Mammary epithelial cell (primary cell): ENCODE measurements at regions of chr7 and their contacts with region 1.

Region 1: GRCh38 chr7:28626624-28627262 is 214.4 kb downstream of the CREB5 start:
- DNase-seq: peak; percentile 39
- H3K4me3 ChIP-seq: no peak overlapping the region
- H3K27ac ChIP-seq: no peak overlapping the region
- H3K4me1 ChIP-seq: peaks cover 5% of the 10 kb centered on the region
- H3K27me3 ChIP-seq: no peaks in the 10 kb centered on the region
- CTCF ChIP-seq: peak; percentile 69 to 75

Region 2: GRCh38 chr7:28389504-28390395 is 237.0 kb before region 1 on chr7:
- CTCF ChIA-PET with region 1: no interaction called
- dilution Hi-C with region 1: no loop called
- in situ Hi-C with region 1: loop called in 1 of 2 experiments (anchors 5 kb)
- intact Hi-C with region 1: loop called (anchors 1 kb)
- DNase-seq: peak; percentile 58
- H3K4me3 ChIP-seq: peak overlapping the region; percentile 26 to 58 (median 30)
- H3K27ac ChIP-seq: no peak overlapping the region
- H3K4me1 ChIP-seq: peaks cover 9% of the 10 kb centered on the region
- H3K27me3 ChIP-seq: no peaks in the 10 kb centered on the region
- CTCF ChIP-seq: peak; percentile 58 to 65

Region 3: DNA sequence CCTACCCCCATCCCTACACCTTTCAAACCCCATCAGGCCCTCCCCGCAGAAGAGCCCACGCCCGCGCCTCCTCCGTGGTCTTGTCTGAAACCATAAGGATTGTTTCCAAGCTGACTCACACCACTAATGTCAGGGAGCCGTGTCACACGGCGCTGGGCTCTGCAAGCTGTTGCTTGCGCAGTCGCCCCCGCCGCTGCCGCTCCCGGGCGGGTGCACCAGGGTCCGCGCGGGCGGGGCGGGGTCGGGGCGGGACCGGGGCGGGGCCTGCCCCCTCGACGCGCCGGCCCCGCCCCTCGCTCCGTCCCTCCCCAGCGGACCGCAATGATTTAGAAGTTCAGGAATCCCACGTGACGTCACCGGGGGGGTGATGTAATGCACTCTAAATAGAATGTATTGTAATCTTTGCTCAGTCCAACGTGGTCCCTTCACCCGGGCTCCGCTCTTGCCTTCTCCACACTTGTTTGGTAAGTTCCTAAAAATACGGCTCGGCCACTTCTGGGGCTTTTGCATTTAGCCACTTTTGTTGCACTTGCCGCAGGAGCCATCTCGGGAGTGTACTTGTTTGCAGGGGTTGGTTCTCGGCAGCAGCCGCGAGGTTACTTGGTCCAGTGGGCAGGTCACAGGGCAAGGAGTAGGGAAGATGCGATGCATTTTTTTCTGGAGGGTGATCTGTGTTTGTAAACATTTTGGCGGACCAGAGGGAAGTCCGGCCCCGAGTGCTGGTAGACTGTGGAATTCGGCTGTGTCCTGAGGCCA is 217.6 kb before region 1 on chr7:
- CTCF ChIA-PET with region 1: no interaction called
- dilution Hi-C with region 1: no loop called
- in situ Hi-C with region 1: no loop called
- intact Hi-C with region 1: loop called (anchors 5 kb)
- DNase-seq: peak; percentile 94
- H3K4me3 ChIP-seq: peak overlapping the region; percentile 51 to 77 (median 55)
- H3K27ac ChIP-seq: peak overlapping the region; percentile 61
- H3K4me1 ChIP-seq: peaks cover 42% of the 10 kb centered on the region
- H3K27me3 ChIP-seq: peaks cover 5% of the 10 kb centered on the region
- CTCF ChIP-seq: no peak

Region 4: GRCh38 chr7:28419717-28420116 is 207.0 kb before region 1 on chr7:
- CTCF ChIA-PET with region 1: no interaction called
- dilution Hi-C with region 1: no loop called
- in situ Hi-C with region 1: no loop called
- intact Hi-C with region 1: no loop called
- DNase-seq: peak; percentile 86
- H3K4me3 ChIP-seq: no peak overlapping the region
- H3K27ac ChIP-seq: no peak overlapping the region
- H3K4me1 ChIP-seq: no peaks in the 10 kb centered on the region
- H3K27me3 ChIP-seq: peaks cover 1% of the 10 kb centered on the region
- CTCF ChIP-seq: no peak

Region 5: GRCh38 chr7:28509251-28510022 is 117.3 kb before region 1 on chr7:
- CTCF ChIA-PET with region 1: no interaction called
- dilution Hi-C with region 1: no loop called
- in situ Hi-C with region 1: no loop called
- intact Hi-C with region 1: loop called (anchors 5 kb)
- DNase-seq: peak; percentile 68
- H3K4me3 ChIP-seq: no peak overlapping the region
- H3K27ac ChIP-seq: no peak overlapping the region
- H3K4me1 ChIP-seq: peaks cover 5% of the 10 kb centered on the region
- H3K27me3 ChIP-seq: no peaks in the 10 kb centered on the region
- CTCF ChIP-seq: no peak

Region 6: GRCh38 chr7:28536259-28536658 is 90.5 kb before region 1 on chr7:
- CTCF ChIA-PET with region 1: no interaction called
- dilution Hi-C with region 1: no loop called
- in situ Hi-C with region 1: no loop called
- intact Hi-C with region 1: loop called (anchors 10 kb)
- DNase-seq: peak; percentile 55
- H3K4me3 ChIP-seq: no peak overlapping the region
- H3K27ac ChIP-seq: no peak overlapping the region
- H3K4me1 ChIP-seq: peaks cover 6% of the 10 kb centered on the region
- H3K27me3 ChIP-seq: peaks cover 3% of the 10 kb centered on the region
- CTCF ChIP-seq: peak; percentile 78 to 82

Region 7: GRCh38 chr7:28685644-28686417 is 59.1 kb after region 1 on chr7:
- CTCF ChIA-PET with region 1: no interaction called
- dilution Hi-C with region 1: no loop called
- in situ Hi-C with region 1: no loop called
- intact Hi-C with region 1: loop called (anchors 2 kb)
- DNase-seq: peak; percentile 96
- H3K4me3 ChIP-seq: peak overlapping the region; percentile 47 to 99 (median 79)
- H3K27ac ChIP-seq: peak overlapping the region; percentile 98
- H3K4me1 ChIP-seq: peaks cover 25% of the 10 kb centered on the region
- H3K27me3 ChIP-seq: no peaks in the 10 kb centered on the region
- CTCF ChIP-seq: no peak

Region 8: GRCh38 chr7:28853834-28854749 is 227.3 kb after region 1 on chr7:
- CTCF ChIA-PET with region 1: no interaction called
- dilution Hi-C with region 1: no loop called
- in situ Hi-C with region 1: no loop called
- intact Hi-C with region 1: loop called (anchors 2 kb)
- DNase-seq: peak; percentile 69
- H3K4me3 ChIP-seq: peak overlapping the region; percentile 41 to 65 (median 58)
- H3K27ac ChIP-seq: no peak overlapping the region
- H3K4me1 ChIP-seq: peaks cover 35% of the 10 kb centered on the region
- H3K27me3 ChIP-seq: no peaks in the 10 kb centered on the region
- CTCF ChIP-seq: peak; percentile 61 to 93